ENCODE measurements at regions of chr11 and their contacts with region 1.

Region 1: GRCh38 chr11:95432714-95433503 is 201.9 kb upstream of the SESN3 start:
- DNase-seq: no peak
- CTCF ChIP-seq: no peak

Region 2: DNA sequence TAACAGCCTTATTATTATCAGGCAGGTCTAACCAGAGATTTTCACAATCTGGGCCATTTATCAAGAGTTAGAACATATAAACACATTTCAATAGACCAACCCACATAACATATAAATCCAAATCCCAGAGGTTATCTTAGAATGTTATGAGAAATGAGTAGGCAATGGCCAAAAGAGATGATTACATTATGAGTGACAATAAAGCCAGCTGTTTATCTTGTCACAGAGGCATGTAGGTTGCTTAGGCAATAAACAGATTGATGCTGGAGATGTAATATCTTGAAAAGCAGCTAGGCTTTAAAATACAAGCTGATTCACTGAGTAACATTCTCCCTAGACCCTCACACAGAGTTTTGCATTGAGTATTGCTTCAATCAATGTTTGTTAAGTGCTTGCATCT is 53.4 kb before region 1 on chr11:
- CTCF ChIA-PET with region 1: no interaction called
- POLR2A ChIA-PET with region 1: no interaction called
- DNase-seq: no peak
- CTCF ChIP-seq: no peak

Region 3: DNA sequence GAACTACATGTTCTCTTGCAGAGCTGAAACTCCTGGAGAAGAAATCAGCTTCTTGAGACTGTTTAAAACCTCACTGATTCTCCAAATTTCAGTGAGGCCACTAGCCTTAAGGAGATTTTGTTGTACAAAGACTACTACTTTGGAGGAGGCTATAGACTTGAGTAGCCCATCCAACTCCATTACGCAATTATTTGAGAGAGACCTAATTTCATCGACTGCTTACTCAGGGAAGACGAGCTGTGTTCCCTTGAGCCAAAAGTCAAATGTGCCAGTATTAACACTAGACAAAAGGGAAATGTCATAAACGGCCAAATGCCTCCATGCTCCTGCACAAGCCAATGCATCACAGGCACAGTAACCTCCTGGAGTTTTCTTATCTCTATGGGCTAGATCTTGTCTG is 19.1 kb before region 1 on chr11:
- CTCF ChIA-PET with region 1: no interaction called
- POLR2A ChIA-PET with region 1: no interaction called
- DNase-seq: no peak
- CTCF ChIP-seq: no peak

Region 4: GRCh38 chr11:95443386-95443785 is 10.5 kb after region 1 on chr11:
- CTCF ChIA-PET with region 1: interaction called, 11 read pairs
- POLR2A ChIA-PET with region 1: no interaction called
- DNase-seq: peak; percentile 49
- CTCF ChIP-seq: no peak